ENCODE measurements at regions of chr5 and their contacts with region 1.

Region 1: DNA sequence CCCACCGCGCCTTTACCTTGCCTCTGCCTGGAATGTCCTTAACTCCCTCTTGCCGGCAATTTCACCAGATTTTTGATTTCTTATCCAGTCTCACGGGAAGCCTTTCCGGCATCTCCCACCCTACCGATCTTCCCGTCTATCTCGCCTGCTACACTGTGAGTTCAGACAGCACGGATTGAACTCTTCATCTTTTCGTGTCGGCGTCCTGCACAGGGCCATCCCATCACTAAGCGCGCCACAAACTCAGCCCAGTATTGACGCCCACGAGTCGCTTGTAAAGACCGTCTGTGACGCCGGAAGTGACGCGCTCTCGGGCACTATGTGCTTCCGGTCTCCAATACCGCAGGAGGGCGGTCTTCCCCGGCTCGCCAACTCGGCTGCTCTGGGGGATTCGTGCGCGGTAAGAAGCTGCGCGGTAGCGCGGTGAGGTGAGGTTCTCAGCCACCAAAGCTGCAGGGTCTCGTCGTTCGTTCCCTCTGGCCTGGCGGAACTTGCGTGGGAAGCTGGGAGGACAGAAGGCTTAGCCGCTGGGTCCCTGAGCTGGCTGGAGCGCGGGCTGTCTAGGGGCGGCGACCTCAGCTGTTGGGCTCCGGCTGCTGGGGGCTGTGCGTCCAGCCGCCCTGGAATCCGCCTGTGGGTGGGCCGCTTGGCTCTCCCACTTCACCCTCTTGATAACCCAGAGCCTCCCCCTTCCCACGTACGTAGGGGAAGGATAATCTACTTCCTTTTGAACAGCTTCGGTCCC is at the start of gene ZCCHC9:
- DNase-seq: peak; percentile 86
- ATAC-seq: peak; percentile 91
- H3K4me3 Mint-ChIP-seq: peak within 1 kb of the TSS; percentile 94
- H3K27ac Mint-ChIP-seq: peak within 1 kb of the TSS; percentile 93
- H3K4me1 Mint-ChIP-seq: peaks cover 32% of the 10 kb centered on the region
- H3K27me3 Mint-ChIP-seq: no peaks in the 10 kb centered on the region
- CTCF ChIP-seq: no peak
- total RNA-seq, gene ZCCHC9: 23.7 and 24.0 TPM in 2 replicates

Region 2: DNA sequence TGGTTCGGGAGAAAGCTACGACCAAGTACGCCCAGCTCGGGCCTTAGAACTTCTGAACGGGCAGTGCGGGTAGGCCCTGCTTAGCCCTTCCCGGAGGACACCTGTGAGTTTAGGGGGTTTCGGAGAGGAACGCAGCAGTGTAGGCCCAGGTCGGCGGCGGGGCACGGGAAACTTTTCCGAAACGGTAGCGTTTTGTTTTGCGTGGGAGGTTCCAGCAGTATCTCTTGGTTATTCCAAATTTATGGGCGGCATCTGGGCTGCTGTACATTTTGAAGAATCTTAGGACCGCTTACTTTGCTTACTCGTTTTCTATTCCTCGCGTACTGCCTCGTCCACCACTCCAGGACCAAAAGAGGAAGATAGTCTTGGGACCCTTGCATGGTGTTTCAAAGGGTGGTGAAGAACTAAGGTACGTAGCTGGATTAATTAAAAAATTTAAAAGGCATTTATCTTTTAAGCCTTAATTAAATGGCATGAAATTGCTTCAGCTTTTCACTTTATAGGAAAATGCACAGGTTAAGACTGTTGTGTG is 1688.7 kb before region 1 on chr5:
- CTCF ChIA-PET with region 1: no interaction called
- POLR2A ChIA-PET with region 1: no interaction called
- intact Hi-C with region 1: loop called (anchors 2 kb)
- DNase-seq: no peak
- ATAC-seq: peak; percentile 16
- H3K4me3 Mint-ChIP-seq: peak overlapping the region; percentile 99
- H3K27ac Mint-ChIP-seq: peak overlapping the region; percentile 98
- H3K4me1 Mint-ChIP-seq: peaks cover 34% of the 10 kb centered on the region
- H3K27me3 Mint-ChIP-seq: peaks cover 2% of the 10 kb centered on the region
- CTCF ChIP-seq: no peak

Region 3: DNA sequence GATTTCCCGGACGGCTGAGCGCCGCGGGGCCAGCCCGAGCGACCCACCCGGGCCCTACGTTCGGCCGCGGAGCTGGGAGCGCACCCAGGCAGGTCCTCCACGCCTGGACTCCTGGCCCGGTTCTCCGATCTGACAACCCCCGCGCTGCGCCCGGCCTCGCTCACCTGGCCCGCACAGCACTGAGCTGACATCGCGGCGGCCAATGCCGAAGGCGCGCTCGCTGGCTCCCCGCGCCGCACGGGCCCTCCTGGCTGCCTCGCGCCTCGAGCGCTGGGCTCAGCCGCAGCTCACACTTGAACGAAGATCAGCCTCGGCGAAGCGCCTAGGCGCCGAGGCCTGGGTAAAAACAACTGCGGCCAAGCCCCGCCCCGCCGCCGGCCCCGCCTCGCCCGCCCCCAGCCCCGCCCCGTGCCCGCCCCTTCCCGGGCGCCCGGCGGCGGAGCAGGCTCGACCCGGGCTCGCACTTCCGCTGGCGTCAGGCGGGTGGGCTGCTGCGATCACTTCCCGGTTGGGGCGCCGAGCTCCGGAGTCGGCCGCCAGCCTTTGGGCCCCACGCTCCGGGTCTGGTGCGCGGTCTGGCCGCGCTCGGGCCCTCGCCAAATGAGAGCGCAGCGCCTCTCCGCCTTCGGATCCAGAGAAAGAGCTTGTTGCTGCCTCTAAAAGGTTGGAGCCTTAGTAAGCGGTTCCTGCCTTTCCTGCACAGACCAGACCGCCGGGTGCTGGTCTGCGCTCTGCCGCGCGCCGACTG is 1045.5 kb before region 1 on chr5 and contains the start of gene SERINC5:
- CTCF ChIA-PET with region 1: no interaction called
- POLR2A ChIA-PET with region 1: interaction called, 4 read pairs
- intact Hi-C with region 1: loop called (anchors 5 kb)
- DNase-seq: peak; percentile 75
- ATAC-seq: peak; percentile 84
- H3K4me3 Mint-ChIP-seq: peak within 1 kb of the TSS; percentile 96
- H3K27ac Mint-ChIP-seq: peak within 1 kb of the TSS; percentile 95
- H3K4me1 Mint-ChIP-seq: peaks cover 29% of the 10 kb centered on the region
- H3K27me3 Mint-ChIP-seq: no peaks in the 10 kb centered on the region
- CTCF ChIP-seq: no peak
- total RNA-seq, gene SERINC5: 4.4 and 5.3 TPM in 2 replicates

Region 4: DNA sequence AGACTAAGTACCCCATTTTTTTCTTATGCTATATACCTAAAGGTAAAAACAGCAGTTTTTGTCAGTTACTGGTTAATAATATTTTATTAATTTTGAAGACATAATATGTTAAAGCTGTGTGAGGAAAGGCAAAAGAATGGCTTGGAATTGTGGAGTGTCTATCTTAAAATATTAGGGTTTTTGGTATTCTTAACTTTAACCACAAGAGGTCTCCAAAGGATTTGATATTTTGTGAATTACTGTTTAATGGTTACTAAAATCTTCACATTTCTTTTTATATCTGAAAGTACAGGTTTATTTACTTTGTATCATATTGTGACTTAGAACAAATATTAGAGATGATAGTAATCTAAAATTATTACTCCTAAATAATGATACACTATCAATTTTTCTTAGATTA is 614.7 kb before region 1 on chr5:
- CTCF ChIA-PET with region 1: interaction called, 5 read pairs
- POLR2A ChIA-PET with region 1: no interaction called
- intact Hi-C with region 1: loop called (anchors 1 kb)
- DNase-seq: no peak
- ATAC-seq: no peak
- H3K4me3 Mint-ChIP-seq: no peak overlapping the region
- H3K27ac Mint-ChIP-seq: no peak overlapping the region
- H3K4me1 Mint-ChIP-seq: peaks cover 4% of the 10 kb centered on the region
- H3K27me3 Mint-ChIP-seq: no peaks in the 10 kb centered on the region
- CTCF ChIP-seq: no peak

Region 5: DNA sequence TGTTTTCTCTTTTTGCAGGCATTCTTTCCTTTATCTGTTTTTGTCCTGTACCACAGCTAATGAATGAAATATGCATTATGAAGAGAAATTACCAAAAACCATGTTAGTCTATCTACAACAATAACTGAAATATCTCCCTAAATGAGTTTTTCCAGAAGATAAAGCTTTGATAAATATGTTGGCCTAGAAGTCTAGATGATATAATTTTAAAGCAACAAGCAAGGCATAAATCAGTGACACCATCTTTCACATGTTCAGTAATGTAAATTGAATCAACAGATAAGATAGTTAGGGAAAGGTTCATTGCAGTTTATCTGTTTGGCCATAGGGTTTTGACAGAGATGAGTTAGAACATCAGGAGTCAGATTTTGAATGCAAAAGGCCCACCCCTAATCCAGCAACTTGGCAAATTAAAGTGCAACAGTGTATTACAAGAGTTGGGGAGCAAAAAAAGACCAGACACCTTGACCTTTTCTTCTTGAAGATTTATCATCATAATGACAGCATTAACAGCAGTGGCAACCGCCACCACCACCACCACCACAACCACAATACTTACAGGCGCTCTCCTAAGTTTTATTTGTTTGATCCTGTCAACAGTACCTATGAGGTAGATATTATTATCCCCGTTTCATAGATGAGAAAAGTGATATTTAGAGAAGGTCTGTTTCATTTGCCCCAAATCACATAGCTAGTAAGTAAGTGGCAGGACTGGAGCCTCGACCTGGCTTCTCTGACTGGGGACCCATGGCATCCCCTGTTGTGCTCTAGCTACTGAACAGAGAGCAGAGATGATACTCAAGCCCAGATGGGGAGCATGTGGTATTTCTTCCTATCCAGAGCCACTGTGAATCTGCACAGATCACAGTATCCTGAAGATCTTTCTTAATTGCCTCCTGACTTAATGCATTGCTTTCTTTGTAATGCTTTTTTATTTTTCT is 523.8 kb before region 1 on chr5:
- CTCF ChIA-PET with region 1: no interaction called
- POLR2A ChIA-PET with region 1: no interaction called
- intact Hi-C with region 1: no loop called
- DNase-seq: no peak
- ATAC-seq: no peak
- H3K4me3 Mint-ChIP-seq: no peak overlapping the region
- H3K27ac Mint-ChIP-seq: no peak overlapping the region
- H3K4me1 Mint-ChIP-seq: no peaks in the 10 kb centered on the region
- H3K27me3 Mint-ChIP-seq: no peaks in the 10 kb centered on the region
- CTCF ChIP-seq: no peak

Region 6: GRCh38 chr5:81121273-81121672 is 180.2 kb before region 1 on chr5:
- CTCF ChIA-PET with region 1: no interaction called
- POLR2A ChIA-PET with region 1: no interaction called
- intact Hi-C with region 1: no loop called
- DNase-seq: no peak
- ATAC-seq: no peak
- H3K4me3 Mint-ChIP-seq: no peak overlapping the region
- H3K27ac Mint-ChIP-seq: no peak overlapping the region
- H3K4me1 Mint-ChIP-seq: no peaks in the 10 kb centered on the region
- H3K27me3 Mint-ChIP-seq: peaks cover 6% of the 10 kb centered on the region
- CTCF ChIP-seq: no peak

Region 7: GRCh38 chr5:81268521-81269196 is 32.8 kb before region 1 on chr5:
- CTCF ChIA-PET with region 1: no interaction called
- POLR2A ChIA-PET with region 1: no interaction called
- intact Hi-C with region 1: no loop called
- DNase-seq: no peak
- ATAC-seq: no peak
- H3K4me3 Mint-ChIP-seq: no peak overlapping the region
- H3K27ac Mint-ChIP-seq: no peak overlapping the region
- H3K4me1 Mint-ChIP-seq: peaks cover 19% of the 10 kb centered on the region
- H3K27me3 Mint-ChIP-seq: no peaks in the 10 kb centered on the region
- CTCF ChIP-seq: no peak

Region 8: DNA sequence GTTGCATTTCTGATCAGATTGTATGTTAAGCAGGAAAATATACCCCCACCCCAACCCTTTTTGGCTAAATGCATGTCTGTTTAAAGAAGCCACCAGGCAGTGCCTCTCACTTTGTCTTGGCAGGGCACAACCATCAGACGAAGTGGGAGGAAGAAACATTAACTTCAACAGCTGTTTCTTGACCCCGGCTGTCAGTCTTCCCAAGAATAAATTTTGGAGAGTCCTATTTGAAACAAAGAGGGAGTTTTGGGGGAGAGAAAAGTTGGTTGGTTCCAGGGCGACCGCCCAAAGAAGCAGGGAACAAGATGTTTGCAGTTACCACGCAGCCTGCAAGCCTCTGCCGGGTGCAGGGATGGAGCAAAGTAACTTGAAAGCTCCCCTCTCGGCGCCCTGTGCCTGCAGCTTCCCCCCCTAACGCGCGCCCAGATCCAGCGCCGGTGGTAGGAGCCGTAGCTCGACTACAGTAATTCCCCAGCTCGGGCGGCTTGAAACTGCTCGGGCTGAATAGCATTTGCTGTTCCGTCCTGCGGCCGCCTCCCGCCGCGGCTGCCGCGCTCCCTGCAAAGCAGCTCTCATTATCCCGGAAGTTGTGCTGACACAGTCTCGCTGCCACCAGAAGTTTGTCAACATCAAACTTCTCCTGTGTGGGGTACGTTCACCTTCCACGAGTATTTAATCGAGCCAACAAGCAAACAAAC is 550.2 kb after region 1 on chr5:
- CTCF ChIA-PET with region 1: no interaction called
- POLR2A ChIA-PET with region 1: no interaction called
- intact Hi-C with region 1: loop called (anchors 5 kb)
- DNase-seq: peak; percentile 83
- ATAC-seq: peak; percentile 94
- H3K4me3 Mint-ChIP-seq: peak overlapping the region; percentile 93
- H3K27ac Mint-ChIP-seq: peak overlapping the region; percentile 94
- H3K4me1 Mint-ChIP-seq: peaks cover 35% of the 10 kb centered on the region
- H3K27me3 Mint-ChIP-seq: no peaks in the 10 kb centered on the region
- CTCF ChIP-seq: no peak

Region 9: GRCh38 chr5:82174128-82174918 is 872.9 kb after region 1 on chr5:
- CTCF ChIA-PET with region 1: no interaction called
- POLR2A ChIA-PET with region 1: no interaction called
- intact Hi-C with region 1: loop called (anchors 1 kb)
- DNase-seq: peak; percentile 46
- ATAC-seq: peak; percentile 89
- H3K4me3 Mint-ChIP-seq: peak overlapping the region; percentile 12
- H3K27ac Mint-ChIP-seq: peak overlapping the region; percentile 69
- H3K4me1 Mint-ChIP-seq: peaks cover 20% of the 10 kb centered on the region
- H3K27me3 Mint-ChIP-seq: no peaks in the 10 kb centered on the region
- CTCF ChIP-seq: no peak

Region 10: DNA sequence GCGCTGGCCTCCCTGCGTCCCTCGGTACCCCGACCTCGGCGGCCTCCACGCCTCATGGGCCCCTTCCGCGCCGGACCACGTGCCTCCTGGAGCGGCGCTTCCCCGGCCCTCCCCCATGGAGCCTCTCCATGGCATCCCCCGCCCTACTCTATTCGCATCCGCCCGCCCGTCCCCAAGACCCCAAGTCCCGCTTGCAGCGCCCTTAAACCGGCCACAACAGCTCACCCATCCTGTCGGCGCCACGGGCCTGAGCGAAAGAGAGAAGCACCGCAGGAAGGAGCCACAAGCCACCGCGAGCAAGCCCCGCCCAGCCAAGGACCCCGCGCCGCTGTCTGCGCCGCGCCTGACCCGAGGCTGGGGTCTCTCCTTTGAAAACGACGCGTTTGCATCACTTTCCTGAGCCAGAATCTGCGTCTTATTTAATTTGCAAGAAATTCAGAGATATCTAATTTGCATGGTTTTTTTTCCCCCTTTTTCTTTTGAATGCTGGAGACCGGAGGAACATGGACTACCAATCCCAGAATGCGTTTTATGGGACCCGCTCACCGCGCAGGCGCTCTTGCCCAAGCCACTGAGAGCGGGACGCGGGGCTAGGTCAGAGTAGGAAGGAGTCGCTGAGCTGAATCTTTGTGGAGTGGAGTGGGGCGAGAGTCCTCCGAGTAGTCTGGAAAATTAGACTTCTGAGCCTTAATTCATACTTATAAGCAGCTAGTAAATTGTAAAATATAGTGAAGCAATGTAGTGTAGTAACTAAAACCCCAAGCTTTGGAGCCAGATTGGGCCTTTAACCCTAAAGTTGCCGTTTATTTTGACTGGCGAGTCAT is 976.9 kb after region 1 on chr5 and contains the start of gene RPS23:
- CTCF ChIA-PET with region 1: interaction called, 3 read pairs
- POLR2A ChIA-PET with region 1: interaction called, 15 read pairs
- intact Hi-C with region 1: loop called (anchors 1 kb)
- DNase-seq: peak; percentile 79
- ATAC-seq: peak; percentile 92
- H3K4me3 Mint-ChIP-seq: peak within 1 kb of the TSS; percentile 96
- H3K27ac Mint-ChIP-seq: peak within 1 kb of the TSS; percentile 99
- H3K4me1 Mint-ChIP-seq: peaks cover 44% of the 10 kb centered on the region
- H3K27me3 Mint-ChIP-seq: no peaks in the 10 kb centered on the region
- CTCF ChIP-seq: no peak
- total RNA-seq, gene RPS23: 4,125 and 4,753 TPM in 2 replicates